Naive thymus-derived CD4-positive, alpha-beta T cell (primary cell): ENCODE measurements at regions of chr14 and their contacts with region 1.

Region 1: DNA sequence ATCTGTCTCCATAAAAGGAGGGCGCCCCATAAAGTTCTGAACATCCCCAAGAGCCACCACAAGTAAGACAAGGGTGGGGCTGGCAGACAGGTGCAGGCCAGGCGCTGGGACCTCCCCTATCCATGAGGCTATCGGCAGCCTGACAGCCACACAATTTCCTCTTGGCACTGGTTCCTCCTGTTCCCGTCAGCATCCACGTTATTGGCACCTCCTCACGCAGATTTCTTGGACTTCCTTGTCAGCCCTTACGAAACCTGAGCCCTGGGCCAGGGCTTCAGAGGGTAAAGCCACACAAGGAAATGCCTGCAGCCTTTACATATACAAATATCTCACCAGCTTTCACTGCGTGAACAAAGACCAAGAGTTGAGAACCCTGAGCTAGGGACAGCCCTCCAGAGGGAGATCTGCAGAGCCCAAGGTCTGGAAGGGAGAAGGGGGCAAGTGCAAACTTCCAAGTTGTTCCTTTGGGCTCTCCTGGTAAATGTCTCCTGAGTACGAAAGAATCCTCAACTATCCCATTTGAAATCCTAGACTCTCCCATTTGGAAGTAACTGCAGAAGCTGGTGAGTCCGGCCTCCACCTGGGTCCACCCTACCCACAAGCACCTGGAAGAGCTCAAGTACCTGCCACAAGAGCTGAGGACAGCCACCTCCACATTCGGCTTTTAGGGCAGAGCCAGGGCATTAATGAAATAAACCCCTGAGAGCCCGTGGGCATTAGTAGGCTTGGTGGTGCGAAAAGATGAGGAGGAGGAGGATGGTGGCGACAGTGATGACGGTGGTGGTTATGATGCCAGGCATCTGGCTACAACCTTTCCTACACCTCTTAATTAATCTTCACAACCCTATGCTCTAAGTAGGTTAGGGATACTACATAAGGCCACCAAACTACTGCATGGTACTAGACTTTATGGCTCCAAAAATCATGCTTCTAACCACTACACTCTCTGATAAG is 5.5 kb upstream of the TC2N start:
- DNase-seq: peak in 8 of 9 donors; percentile 32 to 84 (median 78)
- ATAC-seq: peak; percentile 59
- H3K4me3 ChIP-seq: peak overlapping the region; percentile 56
- H3K4me3 Mint-ChIP-seq: peak overlapping the region; percentile 84 to 96 (median 90)
- H3K27ac ChIP-seq: peak overlapping the region; percentile 91
- H3K27ac Mint-ChIP-seq: peak overlapping the region; percentile 95 to 100 (median 99)
- H3K4me1 ChIP-seq: peaks cover 72 to 92% of the 10 kb centered on the region in 2 donors
- H3K4me1 Mint-ChIP-seq: peaks cover 76 to 100% (median 96%) of the 10 kb centered on the region in 7 donors
- H3K27me3 ChIP-seq: no peaks in the 10 kb centered on the region
- H3K27me3 Mint-ChIP-seq: no peaks in the 10 kb centered on the region

Region 2: DNA sequence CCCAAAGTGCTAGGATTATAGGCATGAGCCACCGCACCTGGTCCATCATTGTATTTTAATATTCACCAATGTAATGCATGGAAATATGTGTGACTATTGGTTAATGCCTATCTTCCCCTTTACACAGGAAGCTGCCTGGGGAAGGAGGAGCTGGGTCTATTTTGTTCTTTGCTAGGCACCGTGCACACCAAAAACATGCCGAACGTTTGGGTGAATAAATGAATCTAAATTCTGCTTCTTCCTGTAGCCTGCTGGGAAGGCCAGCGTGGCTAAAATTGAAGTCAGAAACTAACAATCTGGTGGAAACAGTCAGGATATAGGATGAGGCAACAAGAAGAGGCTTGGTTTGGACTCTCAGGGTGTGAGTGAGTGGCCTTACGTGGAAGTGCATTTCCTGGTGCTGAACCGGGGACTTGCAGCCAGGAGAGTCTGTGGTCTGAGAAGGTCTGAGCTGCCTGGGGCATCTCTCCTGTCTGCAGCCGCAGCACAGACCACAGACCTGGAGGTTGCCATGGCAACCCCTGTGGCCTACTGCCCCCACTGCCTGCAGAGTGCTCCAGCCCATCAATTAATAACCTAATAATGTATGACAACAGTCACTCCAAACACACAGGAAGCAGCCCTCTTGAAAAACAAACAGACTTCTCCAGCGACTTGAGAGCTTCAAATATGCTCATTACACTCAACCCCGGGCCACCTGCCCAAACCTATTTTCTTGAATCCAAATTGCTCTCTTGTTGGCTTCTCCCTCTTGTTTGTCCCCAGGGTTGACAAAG is 622.8 kb before region 1 on chr14:
- CTCF ChIA-PET with region 1: no interaction called
- POLR2A ChIA-PET with region 1: no interaction called
- intact Hi-C with region 1: loop called in 1 of 2 experiments (anchors 5 kb)
- DNase-seq: peak in 4 of 9 donors; percentile 20 to 52 (median 40)
- ATAC-seq: peak; percentile 8
- H3K4me3 ChIP-seq: peak overlapping the region; percentile 36
- H3K4me3 Mint-ChIP-seq: peak overlapping the region; percentile 27 to 84 (median 57)
- H3K27ac ChIP-seq: peak overlapping the region; percentile 55
- H3K27ac Mint-ChIP-seq: peak overlapping the region; percentile 53 to 98 (median 91)
- H3K4me1 ChIP-seq: peaks cover 63 to 81% of the 10 kb centered on the region in 2 donors
- H3K4me1 Mint-ChIP-seq: peaks cover 54 to 87% (median 80%) of the 10 kb centered on the region in 7 donors
- H3K27me3 ChIP-seq: no peaks in the 10 kb centered on the region
- H3K27me3 Mint-ChIP-seq: no peaks in the 10 kb centered on the region

Region 3: DNA sequence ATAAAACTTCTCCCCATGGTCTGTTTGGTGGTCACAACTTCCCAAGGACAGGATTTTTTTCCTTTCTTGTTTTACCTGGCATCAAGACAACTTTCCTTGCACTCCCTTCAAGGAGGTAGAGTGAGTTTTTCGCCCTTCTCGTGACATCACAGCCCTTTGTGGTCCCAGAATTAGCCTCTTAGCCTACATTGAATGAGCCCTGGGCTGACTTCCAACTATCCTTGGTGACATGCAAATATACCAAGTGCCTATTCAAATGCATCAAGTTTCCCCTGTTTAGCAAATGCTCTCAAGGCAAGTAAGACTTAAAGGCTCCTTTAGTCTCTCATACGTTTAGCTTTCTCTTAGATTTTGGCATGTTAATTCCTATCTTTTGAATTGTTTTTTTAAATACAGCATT is 42.0 kb before region 1 on chr14:
- CTCF ChIA-PET with region 1: interaction called, 4 read pairs
- POLR2A ChIA-PET with region 1: interaction called, 46 read pairs
- intact Hi-C with region 1: no loop called
- DNase-seq: no peak
- ATAC-seq: no peak
- H3K4me3 ChIP-seq: no peak overlapping the region
- H3K4me3 Mint-ChIP-seq: peak overlapping the region in 7 of 10 donors; percentile 20 to 60 (median 42)
- H3K27ac ChIP-seq: no peak overlapping the region
- H3K27ac Mint-ChIP-seq: peak overlapping the region in 7 of 9 donors; percentile 0 to 75 (median 49)
- H3K4me1 ChIP-seq: peaks cover 22 to 33% of the 10 kb centered on the region in 2 donors
- H3K4me1 Mint-ChIP-seq: peaks cover 45 to 96% (median 81%) of the 10 kb centered on the region in 7 donors
- H3K27me3 ChIP-seq: no peaks in the 10 kb centered on the region
- H3K27me3 Mint-ChIP-seq: peaks cover 0 to 3% (median 0%) of the 10 kb centered on the region in 5 donors

Region 4: GRCh38 chr14:91858215-91858905 is 14.4 kb before region 1 on chr14:
- CTCF ChIA-PET with region 1: interaction called, 7 read pairs
- POLR2A ChIA-PET with region 1: interaction called, 245 read pairs
- intact Hi-C with region 1: loop called (anchors 1 to 2 kb)
- DNase-seq: no peak
- ATAC-seq: peak; percentile 63
- H3K4me3 ChIP-seq: no peak overlapping the region
- H3K4me3 Mint-ChIP-seq: peak overlapping the region; percentile 34 to 92 (median 50)
- H3K27ac ChIP-seq: peak overlapping the region; percentile 34
- H3K27ac Mint-ChIP-seq: peak overlapping the region; percentile 51 to 100 (median 88)
- H3K4me1 ChIP-seq: peaks cover 83 to 86% of the 10 kb centered on the region in 2 donors
- H3K4me1 Mint-ChIP-seq: peaks cover 74 to 99% (median 96%) of the 10 kb centered on the region in 7 donors
- H3K27me3 ChIP-seq: no peaks in the 10 kb centered on the region
- H3K27me3 Mint-ChIP-seq: no peaks in the 10 kb centered on the region

Region 5: DNA sequence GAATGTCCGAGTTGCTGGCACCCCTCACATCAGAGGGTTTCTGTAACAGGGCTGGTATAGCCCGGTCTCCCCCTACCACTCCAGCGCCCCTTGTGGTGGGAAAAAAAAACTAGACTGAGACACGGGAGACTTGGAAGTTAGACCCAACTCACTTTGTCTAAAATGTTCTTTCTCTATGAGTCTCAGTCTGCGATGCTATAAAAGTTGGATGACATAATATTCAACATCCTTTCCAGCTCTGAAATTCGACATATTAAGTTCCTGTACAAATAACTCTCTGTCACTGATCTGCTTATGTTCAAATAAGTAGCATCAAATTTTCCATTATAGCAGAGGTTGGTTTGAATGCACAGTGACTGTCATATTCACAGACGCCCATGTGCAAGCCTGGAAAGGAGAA is 20.2 kb after region 1 on chr14:
- CTCF ChIA-PET with region 1: interaction called, 9 read pairs
- POLR2A ChIA-PET with region 1: interaction called, 131 read pairs
- intact Hi-C with region 1: loop called in 1 of 2 experiments (anchors 1 kb)
- DNase-seq: peak in 3 of 9 donors; percentile 19 to 38 (median 30)
- ATAC-seq: peak; percentile 48
- H3K4me3 ChIP-seq: no peak overlapping the region
- H3K4me3 Mint-ChIP-seq: peak overlapping the region in 3 of 10 donors; percentile 31 to 55 (median 38)
- H3K27ac ChIP-seq: no peak overlapping the region
- H3K27ac Mint-ChIP-seq: peak overlapping the region; percentile 6 to 90 (median 72)
- H3K4me1 ChIP-seq: peaks cover 35 to 37% of the 10 kb centered on the region in 2 donors
- H3K4me1 Mint-ChIP-seq: peaks cover 30 to 80% (median 68%) of the 10 kb centered on the region in 7 donors
- H3K27me3 ChIP-seq: no peaks in the 10 kb centered on the region
- H3K27me3 Mint-ChIP-seq: no peaks in the 10 kb centered on the region

Region 6: DNA sequence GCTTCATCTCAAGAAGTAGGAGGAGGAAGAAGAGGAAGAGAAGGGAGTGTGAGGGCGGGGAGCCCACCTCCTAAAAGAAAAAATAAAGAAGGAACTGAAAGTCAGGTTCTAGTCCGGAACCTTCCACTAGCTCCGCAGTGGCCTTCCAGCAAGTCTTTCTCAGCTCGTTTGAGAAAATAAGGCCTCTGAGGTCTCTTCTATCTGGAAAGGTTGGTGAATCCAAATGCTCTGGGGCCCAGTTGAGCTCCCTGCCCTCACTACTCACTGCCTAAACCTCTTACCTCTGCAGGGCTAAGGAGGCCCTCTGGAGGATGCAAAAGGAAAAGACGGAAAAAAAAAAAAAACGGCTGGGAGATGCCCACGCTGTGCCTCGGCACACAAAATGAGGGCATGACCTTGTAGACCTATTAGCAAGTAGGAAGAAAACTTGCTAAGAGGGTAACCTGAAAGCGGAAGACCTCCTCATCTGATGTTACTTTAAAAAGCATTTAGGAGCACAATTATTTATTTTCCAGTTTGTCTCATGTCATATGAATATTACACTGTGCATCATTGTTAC is 38.8 kb after region 1 on chr14:
- CTCF ChIA-PET with region 1: interaction called, 5 read pairs
- POLR2A ChIA-PET with region 1: interaction called, 9 read pairs
- intact Hi-C with region 1: loop called (anchors 1 to 2 kb)
- DNase-seq: peak in 7 of 9 donors; percentile 39 to 76 (median 64)
- ATAC-seq: peak; percentile 95
- H3K4me3 ChIP-seq: no peak overlapping the region
- H3K4me3 Mint-ChIP-seq: peak overlapping the region in 8 of 10 donors; percentile 3 to 65 (median 32)
- H3K27ac ChIP-seq: no peak overlapping the region
- H3K27ac Mint-ChIP-seq: peak overlapping the region in 7 of 9 donors; percentile 66 to 89 (median 83)
- H3K4me1 ChIP-seq: peaks cover 0 to 9% of the 10 kb centered on the region in 2 donors
- H3K4me1 Mint-ChIP-seq: peaks cover 11 to 27% (median 23%) of the 10 kb centered on the region in 7 donors
- H3K27me3 ChIP-seq: no peaks in the 10 kb centered on the region
- H3K27me3 Mint-ChIP-seq: peaks cover 0 to 2% (median 0%) of the 10 kb centered on the region in 5 donors

Region 7: DNA sequence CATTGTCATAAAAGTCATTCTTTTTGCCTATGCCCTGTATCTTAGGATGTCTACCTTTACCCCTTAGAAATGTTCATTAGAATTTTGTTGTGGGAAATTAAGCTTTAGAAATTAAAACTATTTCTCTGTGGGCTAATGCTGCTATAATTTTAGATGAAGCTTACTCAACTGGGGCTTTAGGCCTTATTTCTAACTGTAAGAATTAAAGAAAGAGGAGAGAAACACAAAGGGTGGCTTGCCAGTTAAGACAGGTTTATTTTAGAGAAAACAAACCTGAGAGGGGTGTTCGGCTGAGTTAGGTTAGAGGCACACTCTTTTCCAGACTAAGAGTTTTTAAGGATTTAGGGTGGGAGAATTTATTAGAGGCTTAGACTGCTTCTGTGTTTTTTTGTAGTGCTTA is 160.6 kb after region 1 on chr14:
- CTCF ChIA-PET with region 1: no interaction called
- POLR2A ChIA-PET with region 1: no interaction called
- intact Hi-C with region 1: no loop called
- DNase-seq: no peak
- ATAC-seq: no peak
- H3K4me3 ChIP-seq: no peak overlapping the region
- H3K4me3 Mint-ChIP-seq: peak overlapping the region in 2 of 10 donors; percentile 9 to 16
- H3K27ac ChIP-seq: peak overlapping the region; percentile 35
- H3K27ac Mint-ChIP-seq: peak overlapping the region; percentile 1 to 80 (median 73)
- H3K4me1 ChIP-seq: peaks cover 8 to 10% of the 10 kb centered on the region in 2 donors
- H3K4me1 Mint-ChIP-seq: peaks cover 21 to 55% (median 32%) of the 10 kb centered on the region in 7 donors
- H3K27me3 ChIP-seq: no peaks in the 10 kb centered on the region
- H3K27me3 Mint-ChIP-seq: no peaks in the 10 kb centered on the region

Region 8: DNA sequence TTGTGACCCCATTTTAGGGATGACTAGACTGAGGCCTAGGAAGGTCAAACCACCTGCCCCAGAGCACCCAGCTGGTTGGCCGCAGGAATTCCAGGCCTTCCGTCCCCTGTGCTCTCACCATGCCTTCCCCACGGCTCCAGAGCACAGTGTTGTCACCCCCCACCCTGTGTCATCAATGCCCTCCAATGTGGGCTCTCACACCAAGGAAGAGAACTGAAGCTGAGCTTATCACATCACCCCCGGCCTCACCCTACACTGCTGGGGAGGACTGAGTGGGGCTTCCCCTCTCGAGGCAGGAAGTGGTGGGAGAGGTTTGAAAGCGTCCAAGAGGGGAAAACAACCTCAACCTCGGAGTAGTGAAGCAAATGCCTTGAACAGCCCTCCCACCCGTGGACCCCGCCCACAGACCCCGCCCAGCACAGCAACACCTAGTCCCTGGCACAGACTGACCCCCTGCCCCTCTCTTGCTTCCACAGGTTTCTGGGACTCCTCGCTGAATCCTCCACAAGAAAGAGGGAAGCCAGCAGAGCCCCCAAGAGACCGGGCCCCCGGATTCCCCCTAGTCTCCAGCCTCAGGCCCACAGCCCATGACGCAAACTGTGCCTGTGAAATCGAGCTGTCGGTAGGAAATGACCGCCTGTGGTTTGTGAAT is 778.4 kb after region 1 on chr14:
- CTCF ChIA-PET with region 1: no interaction called
- POLR2A ChIA-PET with region 1: no interaction called
- intact Hi-C with region 1: loop called in 1 of 2 experiments (anchors 10 kb)
- DNase-seq: peak; percentile 50 to 91 (median 87)
- ATAC-seq: peak; percentile 89
- H3K4me3 ChIP-seq: peak overlapping the region; percentile 82
- H3K4me3 Mint-ChIP-seq: peak overlapping the region; percentile 99 to 100 (median 100)
- H3K27ac ChIP-seq: peak overlapping the region; percentile 90
- H3K27ac Mint-ChIP-seq: peak overlapping the region; percentile 94 to 100 (median 99)
- H3K4me1 ChIP-seq: peaks cover 57 to 58% of the 10 kb centered on the region in 2 donors
- H3K4me1 Mint-ChIP-seq: peaks cover 65 to 82% (median 70%) of the 10 kb centered on the region in 7 donors
- H3K27me3 ChIP-seq: no peaks in the 10 kb centered on the region
- H3K27me3 Mint-ChIP-seq: no peaks in the 10 kb centered on the region